GM18951 (cell line): ENCODE measurements at regions of chr5 and their contacts with region 1.

Region 1: GRCh38 chr5:75681125-75681830 is 36.0 kb downstream of the POC5 start:
- POLR2A ChIP-seq: no peak

Region 2: GRCh38 chr5:75202935-75203334 is 478.3 kb before region 1 on chr5:
- in situ Hi-C with region 1: no loop called
- POLR2A ChIP-seq: no peak

Region 3: DNA sequence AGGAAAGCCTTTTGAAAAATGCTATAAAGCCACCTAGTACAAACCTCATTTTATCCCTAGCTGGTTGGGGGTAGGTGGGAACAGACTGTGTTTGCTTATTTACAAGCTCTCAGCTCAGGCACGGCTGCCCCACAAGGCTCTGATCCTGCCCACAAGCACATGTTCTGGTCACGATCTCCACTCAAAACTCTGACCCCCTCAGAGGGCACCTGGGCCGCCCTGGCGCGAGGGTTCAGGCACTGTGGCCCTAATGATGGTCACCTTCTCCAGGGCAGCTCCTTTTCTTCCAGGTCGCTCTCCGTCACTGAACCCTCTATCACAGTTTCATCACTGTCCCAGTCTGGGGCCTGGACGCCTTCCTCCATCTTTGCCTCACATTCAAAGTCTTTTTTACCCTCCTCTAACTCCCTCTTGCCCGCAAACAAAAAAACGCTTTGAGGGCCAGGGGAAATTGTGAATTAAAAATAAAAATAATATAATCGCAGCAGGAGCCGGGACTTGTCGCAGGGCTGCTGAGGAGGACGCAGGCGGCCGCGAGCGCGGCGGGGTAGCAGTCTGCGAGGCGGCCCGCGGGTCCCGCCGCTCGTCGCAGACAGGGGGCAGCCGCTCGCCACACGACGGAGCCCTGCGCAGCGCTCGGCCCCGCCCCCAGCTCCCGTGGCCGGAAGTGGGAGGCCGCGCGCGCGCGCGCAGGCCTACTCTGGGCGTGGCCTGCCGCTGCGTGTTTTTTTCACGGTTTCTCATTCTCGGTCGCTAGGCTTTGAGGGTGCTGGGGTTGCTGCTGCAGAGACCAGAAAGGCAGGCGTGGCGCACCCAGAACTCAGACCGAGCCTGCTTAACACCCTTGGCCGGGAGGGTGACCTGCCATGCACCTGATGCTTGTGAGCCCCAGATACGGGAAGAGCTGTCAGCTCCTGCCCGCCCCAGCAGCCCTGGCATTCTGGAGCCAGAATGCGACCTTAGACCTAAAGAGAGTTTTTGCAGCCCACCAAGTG is 444.7 kb before region 1 on chr5 and contains the start of gene ANKRD31:
- in situ Hi-C with region 1: loop called (anchors 25 kb)
- POLR2A ChIP-seq: peak; percentile 79

Region 4: DNA sequence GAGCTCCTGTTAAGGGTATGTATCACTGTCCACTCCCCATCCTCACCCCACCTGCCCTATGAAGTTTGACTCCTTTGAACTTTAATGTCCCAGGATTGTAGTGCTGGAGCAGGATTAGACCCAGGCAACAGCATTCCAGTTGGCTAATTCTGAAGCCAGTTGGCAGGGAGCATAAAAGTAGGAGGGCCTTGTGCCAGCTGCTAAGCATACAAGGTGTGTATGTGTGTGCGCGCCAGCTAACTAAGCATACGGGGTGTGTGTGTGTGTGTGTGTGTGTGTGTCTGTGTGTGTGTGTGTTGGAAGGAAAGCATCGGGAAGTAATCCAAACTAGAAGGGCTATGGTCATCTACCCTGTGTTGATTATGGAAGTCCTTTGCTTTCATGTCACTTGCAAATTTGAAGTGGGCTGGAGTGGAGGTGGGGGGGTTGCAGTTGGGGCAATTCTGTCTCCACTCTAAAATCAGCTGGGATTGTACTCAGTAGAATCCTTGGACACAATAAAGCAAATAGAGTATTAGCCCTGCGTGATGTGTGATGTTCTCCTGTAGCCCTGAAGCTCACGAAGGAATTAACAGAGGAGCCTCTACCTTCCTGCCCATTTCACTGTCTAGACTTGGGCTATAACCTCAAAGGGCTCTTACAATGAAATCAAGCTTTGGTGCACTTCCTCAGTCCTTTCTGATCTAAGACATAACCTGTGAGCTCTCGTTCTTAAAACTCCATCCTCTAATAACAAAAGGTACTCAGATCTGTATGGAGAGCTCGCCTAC is 317.4 kb before region 1 on chr5:
- in situ Hi-C with region 1: loop called (anchors 10 kb)
- POLR2A ChIP-seq: no peak

Region 5: GRCh38 chr5:75951158-75951557 is 269.9 kb after region 1 on chr5:
- in situ Hi-C with region 1: no loop called
- POLR2A ChIP-seq: no peak